Activated naive CD4-positive, alpha-beta T cell treated with anti-CD3 and anti-CD28 coated beads for 36 hours (primary cell): ENCODE measurements at regions of chr11 and their contacts with region 1.

Region 1: DNA sequence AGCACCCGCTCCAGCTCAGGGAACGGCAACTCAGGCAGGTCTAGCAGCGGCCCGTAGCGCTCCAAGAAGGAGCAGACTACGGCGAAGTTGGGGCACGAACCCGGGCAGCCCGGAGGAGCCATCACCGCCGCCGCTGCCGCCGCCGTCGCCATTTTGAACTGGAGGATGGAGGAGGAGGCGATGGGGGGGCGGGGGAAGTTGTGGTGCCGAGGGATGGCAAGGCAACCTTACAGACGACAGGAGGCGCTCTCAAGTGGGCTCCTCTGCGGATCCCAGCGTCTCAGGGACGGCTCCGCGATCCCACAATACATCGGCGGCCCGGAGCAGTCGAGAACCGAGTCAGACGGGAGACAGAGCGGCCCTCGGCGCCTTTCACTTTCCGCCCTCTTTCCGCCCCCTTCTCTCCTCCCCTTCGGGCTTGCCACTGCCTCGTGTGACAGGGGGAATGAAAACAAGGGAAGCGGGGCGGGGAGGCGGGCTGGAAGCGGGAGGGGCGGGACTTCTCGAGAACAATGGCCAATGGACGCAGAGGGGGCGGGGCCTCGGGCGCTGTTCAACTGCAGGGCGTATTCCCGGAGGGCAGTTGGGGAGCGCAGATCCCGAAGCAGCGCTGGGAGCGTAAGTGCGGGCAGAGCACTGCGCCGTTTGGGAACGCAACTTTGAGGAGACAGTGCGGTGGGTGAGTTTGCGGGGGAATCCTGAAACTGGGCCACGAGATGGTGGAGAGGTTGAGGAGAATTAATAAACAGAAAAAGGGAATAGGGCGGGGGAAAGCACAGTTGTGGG is at the starts of genes AAMDC and RSF1:
- DNase-seq: peak; percentile 98
- H3K4me3 Mint-ChIP-seq: peak within 1 kb of the TSS; percentile 98
- H3K27ac Mint-ChIP-seq: peak within 1 kb of the TSS; percentile 97
- H3K4me1 Mint-ChIP-seq: peaks cover 36% of the 10 kb centered on the region
- H3K27me3 Mint-ChIP-seq: no peaks in the 10 kb centered on the region
- total RNA-seq, gene AAMDC: 6.0 to 6.4 TPM
- total RNA-seq, gene RSF1: 50.3 to 54.2 TPM

Region 2: GRCh38 chr11:76444384-76445123 is 1376.2 kb before region 1 on chr11 and contains the start of gene EMSY:
- CTCF ChIA-PET with region 1: no interaction called
- intact Hi-C with region 1: loop called (anchors 2 kb)
- DNase-seq: peak; percentile 95
- H3K4me3 Mint-ChIP-seq: peak within 1 kb of the TSS; percentile 95
- H3K27ac Mint-ChIP-seq: peak within 1 kb of the TSS; percentile 96
- H3K4me1 Mint-ChIP-seq: peaks cover 32% of the 10 kb centered on the region
- H3K27me3 Mint-ChIP-seq: no peaks in the 10 kb centered on the region
- total RNA-seq, gene EMSY: 23.2 to 26.7 TPM

Region 3: GRCh38 chr11:77776455-77776854 is 44.3 kb before region 1 on chr11:
- CTCF ChIA-PET with region 1: no interaction called
- intact Hi-C with region 1: loop called (anchors 1 kb)
- DNase-seq: no peak
- H3K4me3 Mint-ChIP-seq: no peak overlapping the region
- H3K27ac Mint-ChIP-seq: no peak overlapping the region
- H3K4me1 Mint-ChIP-seq: peaks cover 58% of the 10 kb centered on the region
- H3K27me3 Mint-ChIP-seq: no peaks in the 10 kb centered on the region

Region 4: DNA sequence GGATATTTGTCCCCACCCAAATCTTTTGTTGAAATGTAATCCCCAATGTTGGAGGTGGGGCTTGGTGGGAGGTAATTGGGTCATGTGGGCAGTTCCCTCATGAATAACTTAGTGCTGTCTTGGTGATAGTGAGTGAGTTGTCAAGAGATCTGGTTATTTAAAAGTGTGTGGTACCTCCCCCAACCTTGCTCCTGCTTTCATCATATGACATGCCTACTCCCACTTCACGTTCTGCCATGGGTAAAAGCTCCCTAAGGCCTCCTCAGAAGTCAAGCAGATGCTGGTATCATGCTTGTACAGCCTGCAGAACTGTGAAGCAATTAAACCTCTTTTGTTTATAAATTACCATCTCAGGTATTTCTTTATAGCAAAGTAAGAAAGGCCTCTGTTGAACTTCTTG is 30.7 kb after region 1 on chr11:
- CTCF ChIA-PET with region 1: no interaction called
- intact Hi-C with region 1: no loop called
- DNase-seq: no peak
- H3K4me3 Mint-ChIP-seq: no peak overlapping the region
- H3K27ac Mint-ChIP-seq: no peak overlapping the region
- H3K4me1 Mint-ChIP-seq: no peaks in the 10 kb centered on the region
- H3K27me3 Mint-ChIP-seq: no peaks in the 10 kb centered on the region

Region 5: GRCh38 chr11:78000193-78000592 is 179.4 kb after region 1 on chr11:
- CTCF ChIA-PET with region 1: interaction called, 7 read pairs
- intact Hi-C with region 1: loop called (anchors 1 kb)
- DNase-seq: peak; percentile 66
- H3K4me3 Mint-ChIP-seq: no peak overlapping the region
- H3K27ac Mint-ChIP-seq: no peak overlapping the region
- H3K4me1 Mint-ChIP-seq: peaks cover 5% of the 10 kb centered on the region
- H3K27me3 Mint-ChIP-seq: no peaks in the 10 kb centered on the region

Region 6: DNA sequence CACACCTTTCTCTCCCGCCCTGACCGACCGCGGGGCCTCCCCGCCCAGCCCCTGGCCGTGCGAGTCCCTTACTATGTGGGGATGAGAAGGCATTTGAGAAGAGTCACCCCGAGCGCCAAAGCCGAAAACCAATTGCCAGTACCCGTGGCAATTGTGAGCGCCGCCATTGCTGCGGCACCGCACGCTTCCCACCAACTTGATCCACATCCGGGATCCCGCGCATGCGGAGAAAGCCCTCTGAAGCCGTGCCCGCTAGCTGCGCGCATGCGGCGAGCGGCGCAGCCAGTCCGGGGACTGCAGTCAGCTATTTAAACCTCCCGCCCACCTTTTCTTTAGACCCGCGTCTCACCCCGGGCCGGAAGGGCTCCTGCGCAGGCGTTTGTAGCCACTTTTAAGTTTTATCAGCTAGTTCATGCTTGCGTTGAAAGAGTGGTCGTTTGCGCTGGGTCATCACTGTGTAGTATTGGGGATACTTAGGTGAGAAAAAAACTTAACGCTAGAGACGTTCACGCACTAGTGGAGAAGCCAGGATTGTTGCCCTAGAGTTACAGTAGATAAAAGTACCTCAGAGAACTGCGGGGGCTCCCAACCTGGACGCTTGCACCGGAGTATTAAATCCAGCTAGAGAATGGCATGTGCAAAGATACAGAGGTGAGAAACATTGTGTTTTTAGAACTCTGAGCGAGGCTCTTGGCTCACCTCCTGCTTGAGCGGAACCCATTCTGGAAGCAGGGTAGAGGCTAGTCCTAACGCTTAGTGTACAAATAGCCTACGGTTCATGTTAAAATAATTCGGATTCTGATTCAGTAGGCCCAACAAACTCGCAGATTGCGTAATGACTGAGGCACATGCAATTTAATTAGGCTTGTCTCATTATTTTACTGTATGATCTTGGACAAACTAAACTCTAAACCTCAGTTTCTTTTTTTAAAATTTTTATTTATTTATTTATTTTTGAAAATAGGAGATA is 319.0 kb after region 1 on chr11 and contains the start of gene ALG8:
- CTCF ChIA-PET with region 1: no interaction called
- intact Hi-C with region 1: loop called (anchors 2 kb)
- DNase-seq: peak; percentile 97
- H3K4me3 Mint-ChIP-seq: peak within 1 kb of the TSS; percentile 85
- H3K27ac Mint-ChIP-seq: peak within 1 kb of the TSS; percentile 90
- H3K4me1 Mint-ChIP-seq: peaks cover 33% of the 10 kb centered on the region
- H3K27me3 Mint-ChIP-seq: no peaks in the 10 kb centered on the region
- total RNA-seq, gene ALG8: 35.1 to 35.9 TPM

Region 7: GRCh38 chr11:78574386-78575381 is 753.9 kb after region 1 on chr11 and contains the start of gene NARS2:
- CTCF ChIA-PET with region 1: no interaction called
- intact Hi-C with region 1: loop called (anchors 2 kb)
- DNase-seq: peak; percentile 99
- H3K4me3 Mint-ChIP-seq: peak within 1 kb of the TSS; percentile 92
- H3K27ac Mint-ChIP-seq: peak within 1 kb of the TSS; percentile 84
- H3K4me1 Mint-ChIP-seq: peaks cover 23% of the 10 kb centered on the region
- H3K27me3 Mint-ChIP-seq: no peaks in the 10 kb centered on the region
- total RNA-seq, gene NARS2: 27.7 to 28.3 TPM